ENCODE measurements at regions of chr17 and their contacts with region 1.

Region 1: GRCh38 chr17:81354954-81355347 is 40.3 kb upstream of the BAHCC1 start:
- DNase-seq: no peak

Region 2: GRCh38 chr17:81317961-81318605 is 36.9 kb before region 1 on chr17:
- intact Hi-C with region 1: loop called in 1 of 2 experiments (anchors 1 kb)
- DNase-seq: no peak

Measured in posterior vena cava (tissue), 2 donors.